Panc1 (cell line): ENCODE measurements at regions of chrX and their contacts with region 1.

Region 1: DNA sequence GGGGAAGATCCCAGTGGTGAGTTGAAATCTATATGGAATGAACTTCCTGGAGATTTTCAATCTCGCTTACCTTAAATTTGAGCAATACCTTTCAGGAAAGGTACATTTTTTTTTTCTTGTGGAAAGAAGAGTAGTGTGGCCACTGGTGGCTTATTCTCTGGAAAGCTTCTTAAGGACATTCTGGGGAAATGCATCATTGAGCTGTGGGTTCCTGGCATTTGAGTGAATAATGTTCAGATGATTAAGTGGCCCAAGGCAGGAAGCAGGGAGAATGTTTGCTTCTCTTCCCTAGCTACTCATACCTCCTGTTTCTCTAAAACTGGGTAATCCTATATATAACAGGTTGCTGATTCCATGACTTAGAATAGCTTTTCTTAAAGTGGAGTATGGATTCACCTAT is 31.8 kb downstream of the STAG2 start:
- DNase-seq: no peak
- ATAC-seq: peak; percentile 55; the same call in 1 of the 2 replicates
- H3K4me3 ChIP-seq: no peak overlapping the region
- H3K27ac ChIP-seq: no peak overlapping the region
- H3K4me1 ChIP-seq: peaks cover 19% of the 10 kb centered on the region
- H3K27me3 ChIP-seq: no peaks in the 10 kb centered on the region
- CTCF ChIP-seq: no peak

Region 2: DNA sequence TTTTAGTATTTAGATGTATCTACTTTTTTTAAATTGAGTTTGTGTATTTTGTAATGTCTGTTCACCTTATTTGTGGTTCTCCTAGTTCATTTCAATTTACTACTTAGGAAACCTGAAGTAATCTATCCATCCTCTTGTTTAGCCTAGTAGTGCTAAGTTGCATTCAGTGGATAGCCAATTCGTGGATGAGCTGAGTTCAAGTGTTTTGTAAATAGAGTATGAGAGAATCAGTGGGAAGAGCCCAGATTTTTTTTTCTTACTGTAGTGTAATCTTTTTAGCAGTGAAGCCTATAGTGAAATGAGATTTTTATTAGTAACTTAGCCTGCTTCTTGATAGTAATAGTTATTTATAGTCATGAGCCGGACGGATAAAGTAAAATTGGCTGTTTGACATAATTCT is 10.1 kb before region 1 on chrX:
- CTCF ChIA-PET with region 1: no interaction called
- POLR2A ChIA-PET with region 1: interaction called, 20 read pairs
- in situ Hi-C with region 1: no loop called
- intact Hi-C with region 1: no loop called
- DNase-seq: no peak
- ATAC-seq: no peak
- H3K4me3 ChIP-seq: no peak overlapping the region
- H3K27ac ChIP-seq: no peak overlapping the region
- H3K4me1 ChIP-seq: peaks cover 29% of the 10 kb centered on the region
- H3K27me3 ChIP-seq: no peaks in the 10 kb centered on the region
- CTCF ChIP-seq: no peak